ENCODE measurements at regions of chr14 and their contacts with region 1.

Region 1: DNA sequence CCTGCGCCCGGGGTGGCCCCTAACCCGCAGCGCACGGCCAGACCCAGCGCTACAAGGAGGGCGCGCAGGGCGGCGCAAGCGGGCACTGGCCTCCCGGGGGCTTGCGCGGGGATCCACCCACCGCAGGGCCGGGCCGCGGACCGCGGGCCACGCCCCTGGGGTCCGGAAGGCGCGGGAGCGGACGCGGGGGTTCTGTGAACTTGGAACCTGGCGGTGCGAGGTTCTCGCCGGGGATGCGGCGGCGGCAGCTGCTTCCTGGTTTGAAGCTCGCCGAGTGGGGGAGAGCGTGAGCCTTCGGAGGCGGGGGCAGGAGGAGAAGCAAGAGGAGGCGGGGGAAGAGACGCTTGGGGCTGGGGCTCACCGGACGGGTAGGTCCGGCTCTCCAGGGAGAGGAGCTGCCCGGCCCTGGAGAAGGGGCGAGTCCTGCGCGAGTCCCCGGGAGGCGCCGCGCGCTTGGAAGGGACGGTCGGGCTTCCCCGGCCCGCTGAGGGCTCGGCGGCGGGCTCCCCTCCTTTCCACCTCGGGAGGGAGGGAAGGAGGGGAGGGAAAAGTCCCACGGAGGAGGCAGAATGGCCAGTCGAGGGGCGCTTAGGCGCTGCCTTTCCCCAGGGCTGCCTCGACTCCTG is at the start of gene PRKCH:
- DNase-seq: no peak
- ATAC-seq: peak; percentile 81
- H3K4me3 ChIP-seq: peak within 1 kb of the TSS; percentile 95
- H3K27ac ChIP-seq: peak within 1 kb of the TSS; percentile 80
- H3K4me1 ChIP-seq: peaks cover 6% of the 10 kb centered on the region; the same call in 1 of the 2 replicates
- H3K27me3 ChIP-seq: no peaks in the 10 kb centered on the region; a peak in 1 of 4 replicates
- CTCF ChIP-seq: peak; percentile 3 to 50 (median 20); a peak in 3 of 6 replicates
- EP300 ChIP-seq: no peak
- POLR2A ChIP-seq: peak; percentile 84
- RAD21 ChIP-seq: peak; percentile 41
- polyA plus RNA-seq, gene PRKCH: 10.7 to 12.0 TPM

Region 2: DNA sequence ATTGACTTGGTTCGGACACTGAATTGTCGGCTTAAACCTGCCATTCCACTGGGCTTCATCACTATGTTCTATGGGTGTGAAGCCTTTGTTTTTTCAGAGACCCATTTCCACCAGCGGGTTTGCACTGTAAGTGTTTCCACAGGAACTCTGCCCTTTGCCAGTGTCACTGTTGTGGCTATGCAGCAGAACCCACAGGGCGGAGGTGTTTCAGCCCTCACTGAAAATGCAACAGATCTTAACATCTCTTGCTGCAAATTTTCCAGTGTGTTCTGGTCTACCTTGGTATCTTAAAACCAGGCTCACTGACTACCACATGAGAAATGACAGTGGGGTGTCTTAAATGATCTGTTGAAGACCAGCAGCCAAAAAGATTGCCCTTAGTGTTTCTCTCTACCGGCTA is 21.0 kb after region 1 on chr14:
- CTCF ChIA-PET with region 1: interaction called, 5 read pairs
- POLR2A ChIA-PET with region 1: interaction called, 6 read pairs
- RAD21 ChIA-PET with region 1: interaction called, 13 read pairs
- SMC1A ChIA-PET with region 1: interaction called, 22 read pairs
- in situ Hi-C with region 1: no loop called
- intact Hi-C with region 1: no loop called
- DNase-seq: peak; percentile 67
- ATAC-seq: peak; percentile 70
- H3K4me3 ChIP-seq: peak overlapping the region; percentile 57
- H3K27ac ChIP-seq: peak overlapping the region; percentile 74
- H3K4me1 ChIP-seq: peaks cover 63% of the 10 kb centered on the region
- H3K27me3 ChIP-seq: no peaks in the 10 kb centered on the region
- CTCF ChIP-seq: no peak
- EP300 ChIP-seq: peak; percentile 32 to 44; a peak in 1 of 4 replicates
- POLR2A ChIP-seq: no peak
- RAD21 ChIP-seq: no peak

Region 3: DNA sequence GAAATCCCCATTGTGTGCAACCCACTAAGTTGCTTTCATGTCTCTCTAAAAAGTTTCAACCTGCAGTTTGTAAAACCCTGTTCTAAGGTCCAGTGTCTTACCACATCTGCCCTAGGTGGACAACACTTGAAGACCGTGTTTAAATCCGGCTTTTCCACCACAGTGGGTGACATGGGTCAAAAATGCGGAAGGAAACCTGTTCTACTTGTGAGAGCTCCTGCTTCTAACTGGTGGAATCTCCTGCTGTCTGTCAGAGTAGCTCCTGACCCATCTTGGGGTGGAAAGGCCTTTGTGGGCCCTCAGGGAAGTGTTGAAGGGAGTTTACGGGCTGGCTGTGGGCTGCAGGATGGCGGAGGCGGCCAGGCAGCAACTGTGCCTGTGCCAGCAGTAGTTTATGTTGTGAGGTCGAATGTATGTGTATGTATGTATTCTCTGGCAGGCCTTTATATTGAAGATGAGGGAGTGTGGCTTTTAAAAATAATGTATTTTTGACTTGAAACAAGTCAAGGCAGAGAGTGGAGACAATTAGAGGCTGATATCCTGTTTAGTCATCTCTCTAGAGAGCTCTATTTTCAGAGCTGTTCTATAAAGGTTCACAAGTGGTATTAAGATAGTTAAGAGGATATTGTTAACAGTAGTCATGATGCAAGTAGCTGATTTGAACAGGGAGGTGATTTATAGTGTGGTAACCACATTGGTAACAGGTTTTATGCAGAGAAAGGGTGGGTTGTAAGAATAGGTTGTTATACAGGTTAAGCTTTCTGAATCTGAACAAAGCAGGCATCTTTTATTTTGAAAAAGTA is 66.9 kb after region 1 on chr14:
- CTCF ChIA-PET with region 1: interaction called, 19 read pairs
- POLR2A ChIA-PET with region 1: interaction called, 38 read pairs
- RAD21 ChIA-PET with region 1: interaction called, 62 read pairs
- SMC1A ChIA-PET with region 1: interaction called, 64 read pairs
- in situ Hi-C with region 1: no loop called
- intact Hi-C with region 1: loop called (anchors 2 kb)
- DNase-seq: peak; percentile 86
- ATAC-seq: peak; percentile 74
- H3K4me3 ChIP-seq: peak overlapping the region; percentile 24; the same call in 1 of the 2 replicates
- H3K27ac ChIP-seq: peak overlapping the region; percentile 99
- H3K4me1 ChIP-seq: peaks cover 76% of the 10 kb centered on the region
- H3K27me3 ChIP-seq: no peaks in the 10 kb centered on the region
- CTCF ChIP-seq: no peak
- EP300 ChIP-seq: peak; percentile 90 to 93
- POLR2A ChIP-seq: peak; percentile 63
- RAD21 ChIP-seq: no peak

Region 4: DNA sequence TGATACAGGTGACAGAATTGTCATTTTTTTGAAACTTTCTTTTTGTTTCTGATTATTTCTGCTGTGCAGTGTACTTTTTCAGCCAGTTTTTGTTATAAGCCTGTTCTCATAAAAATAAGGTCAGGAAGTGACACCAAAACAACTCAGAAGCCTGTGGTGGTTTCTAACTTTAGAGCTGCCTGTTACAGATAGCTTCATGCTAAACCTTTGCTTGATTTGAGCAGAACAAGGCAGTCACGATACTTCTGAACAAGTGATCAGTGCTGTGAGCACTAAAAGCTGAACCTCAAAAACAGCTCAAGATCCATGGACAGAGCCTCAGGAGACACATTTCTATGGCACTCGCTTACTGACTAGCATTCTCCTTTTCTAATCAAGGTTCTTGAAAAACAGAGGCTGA is 81.9 kb after region 1 on chr14:
- CTCF ChIA-PET with region 1: interaction called, 6 read pairs
- POLR2A ChIA-PET with region 1: interaction called, 7 read pairs
- RAD21 ChIA-PET with region 1: interaction called, 12 read pairs
- SMC1A ChIA-PET with region 1: interaction called, 4 read pairs
- in situ Hi-C with region 1: no loop called
- intact Hi-C with region 1: no loop called
- DNase-seq: peak; percentile 61
- ATAC-seq: peak; percentile 86
- H3K4me3 ChIP-seq: no peak overlapping the region
- H3K27ac ChIP-seq: peak overlapping the region; percentile 89
- H3K4me1 ChIP-seq: peaks cover 17% of the 10 kb centered on the region
- H3K27me3 ChIP-seq: no peaks in the 10 kb centered on the region
- CTCF ChIP-seq: no peak
- EP300 ChIP-seq: no peak
- POLR2A ChIP-seq: peak; percentile 35; the same call in 1 of the 2 replicates
- RAD21 ChIP-seq: no peak

Region 5: GRCh38 chr14:61419226-61419625 is 97.7 kb after region 1 on chr14:
- CTCF ChIA-PET with region 1: no interaction called
- POLR2A ChIA-PET with region 1: no interaction called
- RAD21 ChIA-PET with region 1: no interaction called
- SMC1A ChIA-PET with region 1: no interaction called
- in situ Hi-C with region 1: no loop called
- intact Hi-C with region 1: no loop called
- DNase-seq: no peak
- ATAC-seq: no peak
- H3K4me3 ChIP-seq: no peak overlapping the region
- H3K27ac ChIP-seq: no peak overlapping the region
- H3K4me1 ChIP-seq: peaks cover 15% of the 10 kb centered on the region
- H3K27me3 ChIP-seq: no peaks in the 10 kb centered on the region
- CTCF ChIP-seq: no peak
- EP300 ChIP-seq: no peak
- POLR2A ChIP-seq: no peak
- RAD21 ChIP-seq: no peak